Esophagus muscularis mucosa (tissue), 4 donors: ENCODE measurements at regions of chr1 and their contacts with region 1.

Region 1: GRCh38 chr1:152926091-152926490 is 17.7 kb downstream of the IVL start:
- DNase-seq: no peak
- H3K4me3 ChIP-seq: no peak overlapping the region
- H3K27ac ChIP-seq: no peak overlapping the region
- H3K4me1 ChIP-seq: no peaks in the 10 kb centered on the region
- H3K27me3 ChIP-seq: no peaks in the 10 kb centered on the region
- CTCF ChIP-seq: peak; percentile 47 to 65 (median 58)
- EP300 ChIP-seq: no peak
- POLR2A ChIP-seq: no peak

Region 2: GRCh38 chr1:152654110-152654509 is 272.0 kb before region 1 on chr1:
- intact Hi-C with region 1: loop called (anchors 5 kb)
- DNase-seq: no peak
- H3K4me3 ChIP-seq: no peak overlapping the region
- H3K27ac ChIP-seq: no peak overlapping the region
- H3K4me1 ChIP-seq: no peaks in the 10 kb centered on the region
- H3K27me3 ChIP-seq: no peaks in the 10 kb centered on the region
- CTCF ChIP-seq: peak; percentile 43 to 57 (median 46)
- EP300 ChIP-seq: no peak
- POLR2A ChIP-seq: no peak

Region 3: DNA sequence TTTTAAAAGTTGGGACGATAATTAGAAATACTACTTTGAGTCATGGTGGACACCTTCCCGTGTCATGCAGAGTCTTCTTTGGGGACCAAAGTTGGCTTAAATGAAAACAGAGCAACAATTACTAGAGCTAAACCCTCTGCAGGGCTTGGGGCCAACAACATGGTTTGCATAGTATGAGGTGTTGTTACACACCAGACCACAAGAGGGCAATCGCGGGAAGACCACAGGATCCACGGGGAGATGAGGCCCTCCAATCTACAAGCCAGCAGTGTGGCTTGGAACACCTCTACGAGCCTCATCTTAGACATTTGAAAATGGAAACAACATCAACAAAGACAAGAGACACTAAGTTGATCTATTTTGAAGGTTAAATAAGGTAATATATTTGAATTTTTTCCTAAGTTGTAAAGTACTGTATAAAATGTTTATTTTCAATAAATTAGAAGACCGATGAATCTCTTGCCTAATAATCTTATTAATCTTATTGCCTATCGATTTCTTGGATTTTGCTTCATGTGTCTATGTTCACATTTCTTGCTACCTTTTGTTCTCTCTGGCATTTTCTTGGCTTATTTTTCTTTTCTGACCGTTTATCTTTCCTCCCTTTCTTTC is 56.2 kb before region 1 on chr1:
- intact Hi-C with region 1: loop called (anchors 1 kb)
- DNase-seq: no peak
- H3K4me3 ChIP-seq: no peak overlapping the region
- H3K27ac ChIP-seq: no peak overlapping the region
- H3K4me1 ChIP-seq: peaks cover 0 to 5% (median 0%) of the 10 kb centered on the region in 4 donors
- H3K27me3 ChIP-seq: no peaks in the 10 kb centered on the region
- CTCF ChIP-seq: peak; percentile 60 to 80 (median 65)
- EP300 ChIP-seq: no peak
- POLR2A ChIP-seq: no peak

Region 4: GRCh38 chr1:152981146-152981871 is 55.2 kb after region 1 on chr1:
- intact Hi-C with region 1: no loop called
- DNase-seq: peak; percentile 90
- H3K4me3 ChIP-seq: no peak overlapping the region
- H3K27ac ChIP-seq: no peak overlapping the region
- H3K4me1 ChIP-seq: no peaks in the 10 kb centered on the region
- H3K27me3 ChIP-seq: no peaks in the 10 kb centered on the region
- CTCF ChIP-seq: no peak
- EP300 ChIP-seq: no peak
- POLR2A ChIP-seq: no peak

Region 5: DNA sequence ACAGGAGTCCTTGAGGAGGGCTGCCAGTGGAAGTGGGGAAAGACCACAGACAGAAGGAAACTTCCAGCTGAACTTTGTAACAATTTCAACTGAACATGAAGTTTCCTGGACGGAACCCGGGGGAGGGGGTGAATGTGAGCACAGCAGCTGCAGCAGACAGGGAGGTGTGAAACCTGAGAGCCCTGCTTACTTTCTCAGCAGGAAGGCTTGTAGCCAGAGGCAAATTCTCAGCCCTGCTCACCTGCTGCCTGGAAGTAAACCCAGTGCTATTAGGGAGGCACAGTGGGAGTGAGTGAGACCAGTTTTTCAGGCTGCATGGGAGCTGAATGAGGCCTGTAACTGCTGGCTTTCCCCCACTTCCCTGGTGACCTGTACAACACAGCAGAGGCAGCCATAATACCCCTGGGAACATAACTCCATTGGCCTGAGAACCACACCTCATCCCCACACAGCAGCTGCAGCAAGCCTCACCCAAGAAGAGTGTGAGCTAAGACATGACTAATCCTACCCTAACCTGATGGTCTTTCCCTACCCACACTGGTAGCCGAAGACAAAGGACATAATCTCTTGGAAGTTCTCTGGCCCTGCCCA is 196.8 kb after region 1 on chr1:
- intact Hi-C with region 1: no loop called
- DNase-seq: no peak
- H3K4me3 ChIP-seq: no peak overlapping the region
- H3K27ac ChIP-seq: no peak overlapping the region
- H3K4me1 ChIP-seq: no peaks in the 10 kb centered on the region
- H3K27me3 ChIP-seq: no peaks in the 10 kb centered on the region
- CTCF ChIP-seq: no peak
- EP300 ChIP-seq: no peak
- POLR2A ChIP-seq: no peak